ENCODE measurements at regions of chr6 and their contacts with region 1.

Region 1: DNA sequence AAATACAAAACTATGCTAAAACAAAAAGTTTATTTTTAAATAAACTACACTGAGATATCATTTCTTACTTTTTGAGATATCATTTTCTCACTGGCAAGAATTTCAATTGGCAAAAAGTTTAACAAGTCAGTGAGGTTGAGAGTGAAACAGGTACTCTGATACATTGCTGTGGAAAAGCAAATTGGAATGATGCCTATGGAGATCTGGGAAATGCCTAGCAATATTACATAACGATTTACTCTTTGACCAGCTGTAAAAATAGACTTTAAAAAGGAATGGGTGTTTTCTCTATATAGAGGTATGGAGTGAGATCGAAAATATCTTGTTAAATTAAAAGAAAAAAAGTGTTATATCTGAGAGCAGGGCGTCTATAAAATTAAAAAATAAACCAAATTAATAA is 16.9 kb downstream of the CGAS start:
- DNase-seq: no peak
- ATAC-seq: no peak
- H3K4me3 ChIP-seq: no peak overlapping the region
- H3K27ac ChIP-seq: no peak overlapping the region
- H3K4me1 ChIP-seq: no peaks in the 10 kb centered on the region
- H3K27me3 ChIP-seq: no peaks in the 10 kb centered on the region
- CTCF ChIP-seq: no peak

Region 2: GRCh38 chr6:72547020-72547419 is 888.2 kb before region 1 on chr6:
- intact Hi-C with region 1: no loop called
- DNase-seq: no peak
- ATAC-seq: no peak
- H3K4me3 ChIP-seq: no peak overlapping the region
- H3K27ac ChIP-seq: no peak overlapping the region
- H3K4me1 ChIP-seq: no peaks in the 10 kb centered on the region
- H3K27me3 ChIP-seq: no peaks in the 10 kb centered on the region
- CTCF ChIP-seq: no peak

Region 3: GRCh38 chr6:73388800-73389512 is 46.3 kb before region 1 on chr6:
- intact Hi-C with region 1: loop called in 1 of 10 experiments (anchors 1 kb)
- DNase-seq: peak; percentile 13 to 39
- ATAC-seq: peak; percentile 51 to 87 (median 76)
- H3K4me3 ChIP-seq: peak overlapping the region in 9 of 10 donors; percentile 31 to 60 (median 56)
- H3K27ac ChIP-seq: peak overlapping the region in 4 of 10 donors; percentile 2 to 80 (median 18)
- H3K4me1 ChIP-seq: peaks cover 0 to 14% (median 4%) of the 10 kb centered on the region in 9 donors
- H3K27me3 ChIP-seq: peaks cover 0 to 12% (median 0%) of the 10 kb centered on the region in 7 donors
- CTCF ChIP-seq: peak; percentile 14 to 68 (median 52)

Region 4: GRCh38 chr6:73491377-73491776 is 56.1 kb after region 1 on chr6:
- intact Hi-C with region 1: no loop called
- DNase-seq: no peak
- ATAC-seq: no peak
- H3K4me3 ChIP-seq: no peak overlapping the region
- H3K27ac ChIP-seq: no peak overlapping the region
- H3K4me1 ChIP-seq: no peaks in the 10 kb centered on the region
- H3K27me3 ChIP-seq: no peaks in the 10 kb centered on the region
- CTCF ChIP-seq: no peak

Measured in heart right ventricle (tissue), 16 donors.